ENCODE measurements at regions of chr7 and their contacts with region 1.

Region 1: GRCh38 chr7:151315038-151315655 is 26.5 kb upstream of the NUB1 start:
- DNase-seq: peak; percentile 70 to 78
- ATAC-seq: peak; percentile 82 to 93; a peak in 5 of 6 replicates
- H3K4me3 ChIP-seq: no peak overlapping the region
- H3K27ac ChIP-seq: no peak overlapping the region
- H3K4me1 ChIP-seq: 0 out of 3 replicates have a peak, but pooled peaks cover 3% of the 10 kb centered on the region
- CTCF ChIP-seq: peak; percentile 93
- EP300 ChIP-seq: no peak
- POLR2A ChIP-seq: no peak
- RAD21 ChIP-seq: peak; percentile 84 to 90

Region 2: GRCh38 chr7:151143261-151144015 is 171.7 kb before region 1 on chr7:
- CTCF ChIA-PET with region 1: no interaction called
- POLR2A ChIA-PET with region 1: no interaction called
- DNase-seq: no peak
- ATAC-seq: no peak
- H3K4me3 ChIP-seq: no peak overlapping the region
- H3K27ac ChIP-seq: no peak overlapping the region
- H3K4me1 ChIP-seq: no peaks in the 10 kb centered on the region
- CTCF ChIP-seq: no peak
- EP300 ChIP-seq: no peak
- POLR2A ChIP-seq: no peak
- RAD21 ChIP-seq: no peak

Region 3: GRCh38 chr7:151256410-151257045 is 58.6 kb before region 1 on chr7:
- CTCF ChIA-PET with region 1: interaction called, 10 read pairs
- POLR2A ChIA-PET with region 1: no interaction called
- DNase-seq: no peak
- ATAC-seq: no peak
- H3K4me3 ChIP-seq: no peak overlapping the region
- H3K27ac ChIP-seq: no peak overlapping the region
- H3K4me1 ChIP-seq: peaks cover 5% of the 10 kb centered on the region
- CTCF ChIP-seq: no peak
- EP300 ChIP-seq: no peak
- POLR2A ChIP-seq: no peak
- RAD21 ChIP-seq: no peak

Region 4: GRCh38 chr7:151327659-151328058 is 12.5 kb after region 1 on chr7:
- CTCF ChIA-PET with region 1: interaction called, 86 read pairs
- POLR2A ChIA-PET with region 1: no interaction called
- DNase-seq: no peak
- ATAC-seq: no peak
- H3K4me3 ChIP-seq: no peak overlapping the region
- H3K27ac ChIP-seq: no peak overlapping the region
- H3K4me1 ChIP-seq: no peaks in the 10 kb centered on the region
- CTCF ChIP-seq: no peak
- EP300 ChIP-seq: no peak
- POLR2A ChIP-seq: no peak
- RAD21 ChIP-seq: no peak

Region 5: GRCh38 chr7:151341357-151342101 is 26.4 kb after region 1 on chr7 and contains the start of gene NUB1:
- CTCF ChIA-PET with region 1: interaction called, 234 read pairs
- POLR2A ChIA-PET with region 1: interaction called, 5 read pairs
- DNase-seq: peak; percentile 73 to 89
- ATAC-seq: peak; percentile 93 to 94
- H3K4me3 ChIP-seq: peak within 1 kb of the TSS; percentile 68
- H3K27ac ChIP-seq: peak within 1 kb of the TSS; percentile 83 to 93
- H3K4me1 ChIP-seq: peaks cover 24% of the 10 kb centered on the region
- CTCF ChIP-seq: no peak
- EP300 ChIP-seq: no peak
- POLR2A ChIP-seq: peak; percentile 82
- RAD21 ChIP-seq: no peak
- polyA plus RNA-seq, gene NUB1: 65.6 and 105 TPM in 2 replicates

Region 6: DNA sequence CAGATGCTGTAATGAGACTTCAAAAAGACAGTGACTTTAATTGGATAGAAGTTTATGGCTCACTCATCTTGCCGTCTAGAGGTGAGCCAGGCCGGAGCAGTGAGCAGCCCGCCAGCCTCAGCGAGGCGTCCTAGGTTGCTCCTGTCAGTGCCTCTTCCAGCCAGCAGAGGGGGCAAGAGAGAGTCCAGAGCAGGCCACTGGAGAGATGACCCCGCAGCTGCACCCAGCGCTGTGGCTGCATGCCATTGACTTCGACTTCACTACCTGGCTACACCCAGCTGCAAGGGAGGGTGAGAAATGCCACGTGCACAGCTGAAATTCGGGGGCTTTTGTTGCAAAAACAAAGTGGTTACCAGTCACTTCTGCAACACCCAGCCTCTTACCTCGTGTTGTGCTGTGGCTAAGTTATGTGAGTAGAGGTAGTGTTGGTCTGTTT is 53.0 kb after region 1 on chr7:
- CTCF ChIA-PET with region 1: interaction called, 21 read pairs
- POLR2A ChIA-PET with region 1: no interaction called
- DNase-seq: peak; percentile 76 to 77
- ATAC-seq: peak; percentile 99 to 100
- H3K4me3 ChIP-seq: no peak overlapping the region
- H3K27ac ChIP-seq: peak overlapping the region in 1 of 2 experiments; percentile 32; a peak in 1 of 6 replicates
- H3K4me1 ChIP-seq: peaks cover 4% of the 10 kb centered on the region
- CTCF ChIP-seq: peak; percentile 90
- EP300 ChIP-seq: no peak
- POLR2A ChIP-seq: no peak
- RAD21 ChIP-seq: peak; percentile 85 to 89

Region 7: DNA sequence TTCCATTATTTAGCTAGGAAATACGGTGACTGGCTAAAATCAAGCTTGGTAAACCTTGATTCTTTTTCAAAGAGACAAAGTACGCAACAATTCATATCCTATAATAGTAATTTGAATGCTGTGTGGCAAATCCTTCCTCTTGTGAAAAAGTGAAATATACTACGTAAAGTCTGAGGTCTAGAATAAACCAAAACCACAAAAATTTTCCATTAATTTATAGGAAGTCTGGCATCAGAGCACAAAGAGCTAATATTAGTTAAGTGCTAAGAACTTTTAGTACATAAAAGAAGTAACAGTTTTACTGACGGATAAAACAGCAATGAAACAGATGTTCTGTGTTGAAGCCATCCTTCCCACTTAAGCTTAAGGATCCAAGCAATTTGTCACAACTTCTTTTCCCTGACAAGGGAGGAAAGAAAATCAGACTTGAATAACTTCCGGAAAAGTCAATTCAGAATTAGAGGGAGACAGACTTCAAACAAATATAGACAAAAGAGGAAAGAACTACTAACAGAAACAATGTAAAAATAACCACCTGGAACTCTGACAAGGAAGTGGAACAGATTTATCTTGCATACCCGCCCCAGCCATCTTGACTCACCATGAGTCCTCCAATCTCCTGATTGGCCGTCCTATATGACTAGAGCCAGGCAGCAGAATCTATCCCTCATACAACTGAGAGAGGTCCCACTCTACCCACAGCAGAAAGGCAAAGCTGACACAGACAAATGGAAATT is 170.0 kb after region 1 on chr7:
- CTCF ChIA-PET with region 1: no interaction called
- POLR2A ChIA-PET with region 1: no interaction called
- DNase-seq: peak in 1 of 2 experiments; percentile 69
- ATAC-seq: peak; percentile 67 to 79; a peak in 5 of 6 replicates
- H3K4me3 ChIP-seq: no peak overlapping the region
- H3K27ac ChIP-seq: no peak overlapping the region
- H3K4me1 ChIP-seq: peaks cover 40% of the 10 kb centered on the region
- CTCF ChIP-seq: no peak
- EP300 ChIP-seq: no peak
- POLR2A ChIP-seq: no peak
- RAD21 ChIP-seq: no peak

Measured in A549 (cell line).